Astrocyte of the spinal cord (primary cell): ENCODE measurements at regions of chr10 and their contacts with region 1.

Region 1: DNA sequence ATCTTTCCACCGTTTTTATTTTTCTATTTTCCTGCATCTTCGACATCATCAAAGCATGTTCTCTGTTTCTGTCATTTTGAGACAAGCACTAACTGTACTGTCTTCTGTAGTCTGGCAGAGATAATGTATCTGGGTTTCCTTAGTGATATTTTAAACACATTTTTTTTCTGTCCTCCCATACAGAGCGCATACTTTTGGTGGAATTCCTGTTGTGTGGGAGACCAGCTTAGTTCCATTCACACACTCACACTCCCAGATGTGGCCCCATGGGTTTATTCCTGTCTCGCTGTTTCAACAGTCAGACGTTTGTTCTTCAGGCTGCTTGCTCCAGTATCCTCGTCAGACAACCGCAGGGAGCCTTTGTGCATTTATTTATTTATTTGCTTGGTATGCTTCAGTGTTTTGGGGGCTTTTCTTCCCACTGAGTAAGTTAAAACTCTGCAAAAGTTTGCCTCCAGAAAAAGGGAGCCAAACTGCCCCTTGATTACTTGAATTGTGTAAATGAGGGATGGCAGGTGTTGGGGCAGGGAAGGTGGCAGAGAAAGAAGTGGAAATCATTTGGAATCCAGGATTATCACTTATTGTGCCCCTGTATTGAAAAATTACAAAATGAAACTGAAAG is 456.8 kb upstream of the KLF6 start:
- DNase-seq: peak; percentile 100
- H3K4me3 ChIP-seq: peak overlapping the region; percentile 20
- CTCF ChIP-seq: no peak

Region 2: GRCh38 chr10:3980660-3981059 is 261.2 kb before region 1 on chr10:
- in situ Hi-C with region 1: no loop called
- DNase-seq: no peak
- H3K4me3 ChIP-seq: no peak overlapping the region
- CTCF ChIP-seq: no peak

Region 3: DNA sequence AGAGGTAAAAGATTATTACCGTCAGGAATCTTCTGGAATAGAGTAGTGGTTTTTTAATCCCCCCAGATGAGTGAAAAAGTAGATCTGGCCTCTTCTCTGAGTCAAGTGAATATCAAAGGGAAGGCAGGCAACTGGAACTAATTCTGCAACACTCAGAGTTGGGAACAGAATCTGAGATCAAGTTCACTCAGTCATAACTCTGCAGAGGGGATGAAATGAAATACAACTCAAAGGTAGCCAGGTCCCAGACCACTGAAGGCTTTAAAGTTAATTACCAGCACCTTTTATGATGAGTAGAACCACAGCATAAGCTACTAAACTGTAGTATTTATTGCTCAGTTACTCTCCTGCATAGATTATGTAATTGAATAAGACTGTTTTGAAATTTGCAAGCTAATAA is 128.5 kb after region 1 on chr10:
- in situ Hi-C with region 1: no loop called
- DNase-seq: peak; percentile 75
- H3K4me3 ChIP-seq: no peak overlapping the region
- CTCF ChIP-seq: no peak

Region 4: GRCh38 chr10:4656576-4657182 is 414.8 kb after region 1 on chr10:
- in situ Hi-C with region 1: loop called (anchors 10 kb)
- DNase-seq: peak; percentile 82
- H3K4me3 ChIP-seq: no peak overlapping the region
- CTCF ChIP-seq: peak; percentile 85